ENCODE measurements at regions of chr11 and their contacts with region 1.

Region 1: GRCh38 chr11:44823006-44823405 is 96.2 kb downstream of the TSPAN18 start:
- DNase-seq: no peak
- H3K4me3 ChIP-seq: no peak overlapping the region
- H3K27ac ChIP-seq: no peak overlapping the region
- H3K4me1 ChIP-seq: peaks cover 26% of the 10 kb centered on the region
- H3K27me3 ChIP-seq: no peaks in the 10 kb centered on the region
- CTCF ChIP-seq: peak; percentile 17 to 33
- POLR2A ChIP-seq: no peak

Region 2: DNA sequence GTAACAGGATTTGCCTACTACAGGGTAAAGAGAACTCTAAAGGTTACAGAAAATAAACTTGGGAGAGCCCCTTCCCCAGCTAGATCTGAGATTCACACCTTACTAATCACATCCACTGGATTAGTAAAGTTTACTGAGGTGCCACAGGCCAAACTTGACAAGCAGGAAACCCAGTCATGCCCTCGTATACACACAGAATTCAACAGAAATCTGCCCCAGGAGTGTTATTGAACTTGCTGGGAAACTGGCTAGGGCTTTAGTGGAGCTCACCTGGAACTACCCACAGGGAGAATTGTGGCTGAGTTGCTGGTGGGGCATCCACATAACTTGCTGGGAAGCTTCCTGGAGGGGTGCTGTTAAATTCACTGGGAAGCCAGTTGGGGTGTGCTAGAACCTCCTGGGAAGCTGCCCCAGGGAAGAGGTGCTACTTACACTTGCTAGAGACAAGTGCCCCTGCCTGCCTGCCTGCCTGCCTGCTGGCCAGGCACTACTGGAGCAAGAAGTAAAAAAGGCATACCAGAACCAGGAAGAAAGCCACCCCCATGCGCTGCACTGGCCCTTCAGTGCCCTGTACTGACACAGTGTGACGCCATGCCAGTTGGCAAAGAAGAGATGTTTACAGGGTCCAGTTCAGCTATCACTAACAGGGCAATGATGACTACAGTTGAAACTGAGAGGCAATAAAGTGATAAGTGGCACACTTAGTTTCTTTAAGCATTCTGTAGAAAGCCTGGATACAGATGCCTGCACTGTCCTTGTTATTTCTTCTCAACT is 619.5 kb before region 1 on chr11:
- CTCF ChIA-PET with region 1: no interaction called
- POLR2A ChIA-PET with region 1: no interaction called
- dilution Hi-C with region 1: no loop called
- intact Hi-C with region 1: no loop called
- DNase-seq: no peak
- H3K4me3 ChIP-seq: no peak overlapping the region
- H3K27ac ChIP-seq: no peak overlapping the region
- H3K4me1 ChIP-seq: peaks cover 4% of the 10 kb centered on the region
- H3K27me3 ChIP-seq: no peaks in the 10 kb centered on the region
- CTCF ChIP-seq: no peak
- POLR2A ChIP-seq: no peak

Region 3: DNA sequence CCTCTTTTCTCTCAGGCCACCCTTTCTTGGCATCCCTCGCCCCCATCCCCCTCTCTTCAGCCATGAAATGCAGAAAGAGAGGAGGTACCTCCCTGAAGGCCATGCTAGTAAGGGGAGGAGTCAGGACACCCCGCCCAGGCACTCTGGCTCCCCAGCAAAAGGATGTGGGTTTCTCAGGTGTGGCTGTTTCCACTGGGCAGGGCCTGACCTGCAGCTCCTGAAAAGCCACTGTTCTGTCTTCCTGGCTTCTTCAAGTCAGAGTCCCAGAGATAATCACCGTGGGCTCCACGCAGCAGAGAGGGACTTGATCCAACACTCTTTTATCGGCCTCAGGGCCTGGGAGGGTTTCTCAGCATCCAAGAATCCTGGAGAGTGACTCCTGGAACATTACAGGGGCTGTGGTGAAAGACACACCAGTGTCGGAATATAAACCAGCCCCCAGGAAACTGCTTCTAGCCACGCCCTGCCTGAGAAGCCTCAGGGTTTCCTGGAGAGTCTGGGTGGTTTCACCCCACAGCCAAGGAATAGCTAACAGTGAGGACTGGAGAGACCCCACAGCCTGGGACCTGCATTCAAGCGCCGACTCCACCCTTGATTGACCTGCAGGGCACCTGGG is 141.9 kb before region 1 on chr11:
- CTCF ChIA-PET with region 1: no interaction called
- POLR2A ChIA-PET with region 1: no interaction called
- dilution Hi-C with region 1: no loop called
- intact Hi-C with region 1: no loop called
- DNase-seq: no peak
- H3K4me3 ChIP-seq: no peak overlapping the region
- H3K27ac ChIP-seq: no peak overlapping the region
- H3K4me1 ChIP-seq: peaks cover 11% of the 10 kb centered on the region
- H3K27me3 ChIP-seq: no peaks in the 10 kb centered on the region
- CTCF ChIP-seq: no peak
- POLR2A ChIP-seq: no peak

Region 4: GRCh38 chr11:44833877-44834452 is 11.0 kb after region 1 on chr11:
- CTCF ChIA-PET with region 1: interaction called, 11 read pairs
- POLR2A ChIA-PET with region 1: interaction called, 3 read pairs
- dilution Hi-C with region 1: no loop called
- intact Hi-C with region 1: no loop called
- DNase-seq: no peak
- H3K4me3 ChIP-seq: no peak overlapping the region
- H3K27ac ChIP-seq: no peak overlapping the region
- H3K4me1 ChIP-seq: no peaks in the 10 kb centered on the region
- H3K27me3 ChIP-seq: peaks cover 4 to 9% of the 10 kb centered on the region in 2 experiments
- CTCF ChIP-seq: no peak
- POLR2A ChIP-seq: no peak

Region 5: GRCh38 chr11:44877571-44878497 is 54.8 kb after region 1 on chr11:
- CTCF ChIA-PET with region 1: no interaction called
- POLR2A ChIA-PET with region 1: no interaction called
- dilution Hi-C with region 1: no loop called
- intact Hi-C with region 1: loop called (anchors 5 kb)
- DNase-seq: peak; percentile 39
- H3K4me3 ChIP-seq: peak overlapping the region in 1 of 3 experiments; percentile 18
- H3K27ac ChIP-seq: no peak overlapping the region
- H3K4me1 ChIP-seq: peaks cover 9% of the 10 kb centered on the region
- H3K27me3 ChIP-seq: no peaks in the 10 kb centered on the region
- CTCF ChIP-seq: no peak
- POLR2A ChIP-seq: no peak